Activated B cell treated with CpG ODN at 0.5 μM for 24 hours (primary cell): ENCODE measurements at regions of chr12 and their contacts with region 1.

Region 1: GRCh38 chr12:113152835-113153814 is 3.6 kb downstream of the CFAP73 start:
- DNase-seq: peak; percentile 45
- ATAC-seq: peak; percentile 66
- H3K4me3 Mint-ChIP-seq: peak overlapping the region; percentile 80
- H3K27ac Mint-ChIP-seq: no peak overlapping the region
- H3K4me1 Mint-ChIP-seq: peaks cover 24% of the 10 kb centered on the region
- H3K27me3 Mint-ChIP-seq: peaks cover 8% of the 10 kb centered on the region
- CTCF ChIP-seq: no peak

Region 2: GRCh38 chr12:113135178-113136127 is 17.7 kb before region 1 on chr12 and contains the start of gene RASAL1:
- CTCF ChIA-PET with region 1: interaction called, 11 read pairs
- POLR2A ChIA-PET with region 1: interaction called, 11 read pairs
- intact Hi-C with region 1: loop called (anchors 1 kb)
- DNase-seq: peak; percentile 64
- ATAC-seq: peak; percentile 84
- H3K4me3 Mint-ChIP-seq: peak within 1 kb of the TSS; percentile 77
- H3K27ac Mint-ChIP-seq: peak within 1 kb of the TSS; percentile 80
- H3K4me1 Mint-ChIP-seq: peaks cover 30% of the 10 kb centered on the region
- H3K27me3 Mint-ChIP-seq: peaks cover 11% of the 10 kb centered on the region
- CTCF ChIP-seq: no peak
- total RNA-seq, gene RASAL1: 4.9 and 7.1 TPM in 2 replicates

Region 3: GRCh38 chr12:113142173-113142885 is 10.8 kb before region 1 on chr12:
- CTCF ChIA-PET with region 1: interaction called, 11 read pairs
- POLR2A ChIA-PET with region 1: interaction called, 14 read pairs
- intact Hi-C with region 1: loop called (anchors 1 kb)
- DNase-seq: no peak
- ATAC-seq: peak; percentile 81
- H3K4me3 Mint-ChIP-seq: peak overlapping the region; percentile 19
- H3K27ac Mint-ChIP-seq: peak overlapping the region; percentile 88
- H3K4me1 Mint-ChIP-seq: peaks cover 25% of the 10 kb centered on the region
- H3K27me3 Mint-ChIP-seq: no peaks in the 10 kb centered on the region
- CTCF ChIP-seq: no peak